ENCODE measurements at regions of chr14 and their contacts with region 1.

Region 1: GRCh38 chr14:45253068-45253753 is at the start of gene MIS18BP1:
- DNase-seq: peak; percentile 96
- ATAC-seq: peak; percentile 95
- H3K4me3 ChIP-seq: peak within 1 kb of the TSS; percentile 89 to 100 (median 91)
- H3K27ac ChIP-seq: peak within 1 kb of the TSS; percentile 97
- H3K4me1 ChIP-seq: peaks cover 36% of the 10 kb centered on the region
- H3K27me3 ChIP-seq: no peaks in the 10 kb centered on the region; a peak in 1 of 5 replicates
- CTCF ChIP-seq: peak; percentile 87
- EP300 ChIP-seq: peak; percentile 7 to 26; a peak in 2 of 4 replicates
- POLR2A ChIP-seq: peak; percentile 64 to 78
- RAD21 ChIP-seq: no peak; the same call in none of the 2 replicates
- total RNA-seq, gene MIS18BP1: 36.4 and 54.6 TPM in 2 replicates

Region 2: GRCh38 chr14:43786066-43786762 is 1467.0 kb before region 1 on chr14:
- CTCF ChIA-PET with region 1: no interaction called
- POLR2A ChIA-PET with region 1: no interaction called
- in situ Hi-C with region 1: no loop called
- intact Hi-C with region 1: loop called (anchors 5 kb)
- DNase-seq: no peak
- ATAC-seq: no peak
- H3K4me3 ChIP-seq: no peak overlapping the region
- H3K27ac ChIP-seq: no peak overlapping the region
- H3K4me1 ChIP-seq: peaks cover 16% of the 10 kb centered on the region
- H3K27me3 ChIP-seq: no peaks in the 10 kb centered on the region
- CTCF ChIP-seq: no peak
- EP300 ChIP-seq: no peak
- POLR2A ChIP-seq: no peak
- RAD21 ChIP-seq: no peak

Region 3: DNA sequence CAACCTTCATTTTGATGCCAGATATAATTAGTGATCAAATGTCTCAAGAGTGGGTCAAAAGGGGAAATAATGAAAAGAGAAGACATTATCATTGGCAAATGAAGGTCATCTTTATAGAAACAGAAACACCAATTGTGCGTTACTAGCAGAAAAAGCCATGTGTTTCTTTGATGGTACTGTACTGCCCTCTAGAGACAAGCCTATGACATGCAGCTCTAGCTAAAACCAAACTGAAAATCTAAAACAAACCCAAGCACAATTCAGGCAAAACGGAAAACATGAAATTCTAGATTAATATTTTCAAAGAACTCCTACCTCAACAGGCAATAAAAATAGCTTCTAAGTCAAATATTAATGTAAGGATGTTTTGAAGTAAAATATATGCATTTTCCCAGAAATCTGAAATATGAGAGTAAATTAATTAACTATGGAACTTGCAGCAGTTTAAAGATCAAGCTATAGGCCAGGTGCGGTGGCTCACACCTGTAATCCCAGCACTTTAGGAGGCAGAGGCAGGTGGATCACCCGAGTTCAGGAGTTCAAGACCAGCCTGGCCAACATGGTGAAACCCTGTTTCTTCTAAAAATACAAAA is 406.9 kb before region 1 on chr14:
- CTCF ChIA-PET with region 1: no interaction called
- POLR2A ChIA-PET with region 1: no interaction called
- in situ Hi-C with region 1: no loop called
- intact Hi-C with region 1: no loop called
- DNase-seq: peak; percentile 27
- ATAC-seq: peak; percentile 65
- H3K4me3 ChIP-seq: no peak overlapping the region
- H3K27ac ChIP-seq: no peak overlapping the region
- H3K4me1 ChIP-seq: no peaks in the 10 kb centered on the region
- H3K27me3 ChIP-seq: 0 out of 5 replicates have a peak, but pooled peaks cover 0 to 2% of the 10 kb centered on the region in 2 experiments
- CTCF ChIP-seq: peak; percentile 79
- EP300 ChIP-seq: no peak
- POLR2A ChIP-seq: no peak
- RAD21 ChIP-seq: 0 out of 2 replicates have a peak, but pooled peaks have one; percentile 23

Region 4: GRCh38 chr14:44897045-44897844 is 356.0 kb before region 1 on chr14:
- CTCF ChIA-PET with region 1: no interaction called
- POLR2A ChIA-PET with region 1: interaction called, 18 read pairs
- in situ Hi-C with region 1: no loop called
- intact Hi-C with region 1: loop called (anchors 1 kb)
- DNase-seq: peak; percentile 94
- ATAC-seq: peak; percentile 94
- H3K4me3 ChIP-seq: peak overlapping the region; percentile 83 to 87 (median 87)
- H3K27ac ChIP-seq: peak overlapping the region; percentile 98
- H3K4me1 ChIP-seq: peaks cover 32% of the 10 kb centered on the region
- H3K27me3 ChIP-seq: no peaks in the 10 kb centered on the region
- CTCF ChIP-seq: no peak
- EP300 ChIP-seq: no peak
- POLR2A ChIP-seq: peak; percentile 86 to 88
- RAD21 ChIP-seq: peak; percentile 36; the same call in 1 of the 2 replicates

Region 5: DNA sequence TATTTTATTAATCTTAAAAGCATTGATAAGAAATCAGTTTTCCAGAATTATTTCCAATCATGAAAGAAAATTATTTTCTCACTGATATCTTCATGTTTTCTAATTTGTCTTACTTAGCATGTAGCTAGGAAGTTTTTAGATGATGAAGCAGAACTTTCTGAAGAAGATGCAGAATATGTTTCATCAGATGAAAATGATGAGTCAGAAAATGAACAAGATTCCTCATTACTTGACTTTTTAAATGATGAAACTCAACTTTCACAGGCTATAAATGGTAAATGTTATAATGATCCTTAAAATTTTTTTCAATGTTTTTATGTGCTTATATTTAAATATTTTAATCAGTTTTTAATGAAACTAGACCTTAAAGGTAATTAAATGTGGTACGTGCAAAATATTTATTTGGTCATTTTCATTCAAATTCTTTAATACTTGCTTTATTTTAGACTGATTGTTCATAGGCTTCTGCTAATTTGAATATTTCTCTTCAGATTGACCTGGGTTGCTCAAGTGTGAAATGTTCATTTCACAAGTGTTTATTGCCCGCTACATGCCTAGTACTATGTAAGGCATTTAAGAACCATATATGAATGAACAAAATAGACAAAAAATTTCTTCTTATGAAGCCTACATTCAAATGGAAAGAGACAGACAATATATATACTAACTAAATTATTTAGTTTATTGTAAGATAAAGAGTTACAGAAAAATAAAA is 68.0 kb before region 1 on chr14:
- CTCF ChIA-PET with region 1: no interaction called
- POLR2A ChIA-PET with region 1: no interaction called
- in situ Hi-C with region 1: no loop called
- intact Hi-C with region 1: no loop called
- DNase-seq: no peak
- ATAC-seq: no peak
- H3K4me3 ChIP-seq: no peak overlapping the region
- H3K27ac ChIP-seq: no peak overlapping the region
- H3K4me1 ChIP-seq: no peaks in the 10 kb centered on the region
- H3K27me3 ChIP-seq: no peaks in the 10 kb centered on the region
- CTCF ChIP-seq: no peak
- EP300 ChIP-seq: no peak
- POLR2A ChIP-seq: no peak
- RAD21 ChIP-seq: no peak

Region 6: DNA sequence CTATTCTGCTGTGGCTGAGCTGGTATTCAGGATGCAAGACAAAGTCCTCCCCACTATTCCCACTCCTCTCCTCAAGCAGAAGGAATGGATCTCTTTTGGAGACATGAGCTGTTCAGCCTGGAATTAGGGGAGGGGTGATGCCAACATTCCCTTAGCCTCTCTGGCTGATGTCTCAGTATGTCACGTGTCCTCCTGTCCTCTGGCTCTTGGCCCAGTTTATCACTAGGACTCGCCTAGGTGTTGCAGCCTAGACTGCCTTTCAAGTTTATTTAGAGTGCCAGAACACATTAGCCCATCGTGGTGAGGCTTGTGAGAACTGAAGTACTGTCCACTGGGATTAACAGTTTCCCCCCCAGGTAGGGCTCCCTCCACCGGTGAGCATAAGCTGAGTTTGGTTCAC is 239.7 kb after region 1 on chr14:
- CTCF ChIA-PET with region 1: no interaction called
- POLR2A ChIA-PET with region 1: no interaction called
- in situ Hi-C with region 1: no loop called
- intact Hi-C with region 1: no loop called
- DNase-seq: no peak
- ATAC-seq: no peak
- H3K4me3 ChIP-seq: no peak overlapping the region
- H3K27ac ChIP-seq: no peak overlapping the region
- H3K4me1 ChIP-seq: no peaks in the 10 kb centered on the region
- H3K27me3 ChIP-seq: no peaks in the 10 kb centered on the region
- CTCF ChIP-seq: no peak
- EP300 ChIP-seq: no peak
- POLR2A ChIP-seq: no peak
- RAD21 ChIP-seq: no peak